H1 (cell line): ENCODE measurements at regions of chr2 and their contacts with region 1.

Region 1: DNA sequence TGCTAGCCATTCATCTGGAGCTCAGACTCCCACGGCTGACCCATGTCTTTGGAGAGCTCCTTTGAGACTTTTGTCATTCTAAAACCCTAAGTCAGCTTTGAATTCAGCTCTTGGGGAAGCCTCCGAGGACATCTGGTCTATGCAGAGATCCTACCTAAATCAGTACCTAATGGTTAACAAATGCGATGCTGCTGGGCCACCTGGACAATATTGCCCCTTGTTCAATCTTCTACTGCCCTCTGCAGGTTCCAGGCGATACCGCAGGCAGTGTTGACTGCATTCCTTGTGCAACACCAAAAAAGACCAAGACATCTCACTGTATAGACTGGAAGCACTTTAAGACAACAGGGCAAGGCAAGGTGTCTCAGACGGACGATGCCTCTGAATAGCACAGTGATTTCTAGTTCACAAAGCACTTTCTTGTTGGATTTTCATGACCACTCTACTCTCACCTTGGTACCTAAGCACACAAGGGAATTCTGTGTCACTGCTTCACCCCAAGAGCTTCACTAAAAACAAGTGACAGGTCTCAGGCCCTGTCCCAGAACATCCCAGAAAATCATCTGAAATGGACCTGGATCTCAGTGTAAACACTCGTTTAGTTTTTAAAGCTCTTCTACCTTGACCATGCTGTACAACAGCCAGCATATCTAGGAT is 80.9 kb downstream of the XDH start:
- DNase-seq: peak; percentile 71 to 92
- H3K4me3 ChIP-seq: no peak overlapping the region
- H3K27ac ChIP-seq: no peak overlapping the region
- H3K4me1 ChIP-seq: peaks cover 0 to 6% (median 0%) of the 10 kb centered on the region in 4 experiments; a peak in 2 of 7 replicates
- H3K27me3 ChIP-seq: no peaks in the 10 kb centered on the region; a peak in 1 of 7 replicates
- CTCF ChIP-seq: peak; percentile 85 to 98 (median 95)
- EP300 ChIP-seq: no peak
- POLR2A ChIP-seq: no peak
- RAD21 ChIP-seq: peak; percentile 98 to 99

Region 2: DNA sequence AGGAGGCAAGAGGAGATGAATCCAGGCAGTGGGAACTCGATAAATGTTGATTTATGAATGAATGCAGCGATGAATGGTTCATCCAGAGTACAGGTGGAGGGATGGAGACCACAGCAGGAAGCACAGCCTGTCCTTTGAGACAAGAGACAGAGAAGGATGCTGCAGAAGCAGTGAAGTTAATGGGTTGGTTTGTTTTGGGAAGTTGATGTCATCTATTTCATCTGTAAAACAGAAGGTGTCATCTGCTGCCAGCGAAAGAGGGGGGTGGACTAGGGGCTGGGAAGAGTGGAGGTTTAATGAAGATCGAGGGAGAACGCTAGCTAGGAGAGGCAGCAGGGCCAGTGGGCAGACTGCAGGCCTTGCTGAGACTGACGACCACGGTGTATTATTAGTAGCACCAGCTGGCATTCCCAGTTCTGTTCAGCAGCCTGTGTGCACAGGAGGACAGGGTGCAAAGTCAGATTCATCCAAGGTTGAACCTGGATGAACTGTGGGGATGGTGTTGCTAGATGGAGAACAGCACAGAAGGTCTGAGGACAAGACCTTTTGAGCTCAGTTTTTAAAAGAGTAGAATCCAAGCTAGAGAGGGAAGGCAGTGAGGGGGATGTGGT is 406.1 kb before region 1 on chr2:
- CTCF ChIA-PET with region 1: no interaction called
- POLR2A ChIA-PET with region 1: no interaction called
- DNase-seq: no peak
- H3K4me3 ChIP-seq: no peak overlapping the region
- H3K27ac ChIP-seq: no peak overlapping the region
- H3K4me1 ChIP-seq: no peaks in the 10 kb centered on the region; a peak in 1 of 7 replicates
- H3K27me3 ChIP-seq: no peaks in the 10 kb centered on the region
- CTCF ChIP-seq: no peak
- EP300 ChIP-seq: no peak
- POLR2A ChIP-seq: no peak
- RAD21 ChIP-seq: no peak

Region 3: GRCh38 chr2:31129375-31130171 is 204.1 kb before region 1 on chr2:
- CTCF ChIA-PET with region 1: interaction called, 13 read pairs
- POLR2A ChIA-PET with region 1: no interaction called
- DNase-seq: no peak
- H3K4me3 ChIP-seq: no peak overlapping the region
- H3K27ac ChIP-seq: no peak overlapping the region
- H3K4me1 ChIP-seq: peaks cover 2 to 25% (median 9%) of the 10 kb centered on the region in 4 experiments; a peak in 5 of 7 replicates
- H3K27me3 ChIP-seq: no peaks in the 10 kb centered on the region
- CTCF ChIP-seq: no peak
- EP300 ChIP-seq: no peak
- POLR2A ChIP-seq: no peak
- RAD21 ChIP-seq: no peak

Region 4: DNA sequence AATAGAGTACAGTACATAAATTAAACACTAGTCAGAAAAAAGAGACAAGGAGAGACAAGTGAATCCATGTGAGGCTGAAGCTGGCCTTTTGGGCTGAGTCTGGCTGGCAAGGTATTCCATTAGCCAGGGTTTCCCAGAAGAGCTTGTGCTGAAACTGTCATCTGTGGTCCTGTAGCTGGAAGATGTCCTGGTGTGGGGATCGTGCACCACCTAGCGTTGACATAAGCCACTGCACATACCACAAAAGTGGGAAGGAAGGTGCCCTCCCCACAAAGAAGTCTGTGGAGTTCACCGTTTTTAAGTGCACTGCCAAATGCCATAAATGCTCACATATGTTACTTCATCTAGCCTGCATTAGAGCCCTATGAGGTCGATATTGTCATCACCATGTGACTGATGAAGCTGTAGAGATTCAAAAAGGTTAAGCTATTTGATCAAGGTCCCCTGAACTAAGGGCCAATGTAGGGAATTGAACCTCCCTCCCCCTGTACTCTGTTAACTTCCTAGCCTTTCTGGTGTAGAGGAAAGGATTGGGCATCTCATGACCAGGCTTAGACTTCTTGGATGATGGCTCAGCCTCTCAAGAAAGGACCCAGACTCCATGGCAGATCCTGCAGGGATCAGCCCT is 163.5 kb before region 1 on chr2:
- CTCF ChIA-PET with region 1: interaction called, 54 read pairs
- POLR2A ChIA-PET with region 1: no interaction called
- DNase-seq: peak; percentile 23 to 72
- H3K4me3 ChIP-seq: no peak overlapping the region
- H3K27ac ChIP-seq: no peak overlapping the region
- H3K4me1 ChIP-seq: no peaks in the 10 kb centered on the region
- H3K27me3 ChIP-seq: no peaks in the 10 kb centered on the region
- CTCF ChIP-seq: peak; percentile 86 to 96 (median 96)
- EP300 ChIP-seq: no peak
- POLR2A ChIP-seq: no peak
- RAD21 ChIP-seq: peak; percentile 97 to 98

Region 5: DNA sequence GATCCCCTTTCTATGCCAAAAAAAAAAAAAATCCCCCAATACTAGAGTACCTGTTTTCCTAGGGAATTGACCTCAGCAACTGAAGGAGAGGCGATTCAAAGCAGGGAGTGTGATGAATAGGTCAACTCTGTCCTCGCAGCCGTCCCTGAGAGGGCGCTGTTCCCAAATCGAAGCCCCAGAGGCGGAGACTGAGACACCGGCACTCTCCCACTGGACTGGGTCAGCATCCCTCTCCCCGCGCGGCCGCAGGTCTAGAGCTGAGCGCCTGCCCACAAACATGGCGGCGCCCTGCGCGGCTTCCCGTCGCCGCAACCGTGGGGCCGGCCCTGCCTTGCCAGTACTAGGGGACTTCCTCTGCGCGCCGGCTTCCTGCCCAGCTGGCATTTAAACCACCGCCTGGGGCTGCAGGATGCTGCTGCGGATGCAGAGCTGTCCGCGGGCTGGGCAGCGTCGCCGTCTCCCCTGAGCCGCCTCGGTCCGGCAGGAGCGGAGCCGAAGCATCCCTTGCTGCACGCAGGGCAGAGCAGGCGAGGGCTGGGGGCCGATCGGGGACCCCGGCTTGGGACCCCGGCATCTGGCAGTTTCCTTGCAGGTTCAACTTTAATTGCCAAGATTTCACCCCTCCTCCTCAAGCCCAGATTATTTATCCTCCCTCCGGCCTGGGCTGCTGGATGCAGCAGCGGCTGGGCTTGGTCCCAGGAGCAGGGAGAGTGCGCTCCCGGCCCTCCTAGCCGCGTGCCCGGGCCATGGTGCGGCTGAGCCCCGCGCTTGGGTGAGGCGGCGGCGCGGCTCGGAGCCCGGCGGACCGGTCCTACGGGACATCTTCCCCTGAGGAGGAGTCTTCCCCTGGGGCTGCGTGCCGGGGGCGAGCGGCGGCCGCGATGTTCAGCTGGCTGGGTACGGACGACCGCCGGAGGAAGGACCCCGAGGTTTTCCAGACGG is 99.6 kb before region 1 on chr2 and contains the start of gene EHD3:
- CTCF ChIA-PET with region 1: interaction called, 30 read pairs
- POLR2A ChIA-PET with region 1: no interaction called
- DNase-seq: peak; percentile 94 to 95
- H3K4me3 ChIP-seq: peak within 1 kb of the TSS; percentile 54 to 84 (median 70)
- H3K27ac ChIP-seq: no peak within 1 kb of the TSS
- H3K4me1 ChIP-seq: peaks cover 4 to 6% (median 4%) of the 10 kb centered on the region in 4 experiments; a peak in 5 of 7 replicates
- H3K27me3 ChIP-seq: peaks cover 0 to 8% (median 5%) of the 10 kb centered on the region in 4 experiments; a peak in 4 of 7 replicates
- CTCF ChIP-seq: peak; percentile 69 to 91 (median 84)
- EP300 ChIP-seq: no peak
- POLR2A ChIP-seq: peak in 1 of 2 experiments; percentile 91; a peak in 2 of 3 replicates
- RAD21 ChIP-seq: peak; percentile 57 to 63
- total RNA-seq, gene EHD3: 12.0 TPM in 2 replicates

Region 6: DNA sequence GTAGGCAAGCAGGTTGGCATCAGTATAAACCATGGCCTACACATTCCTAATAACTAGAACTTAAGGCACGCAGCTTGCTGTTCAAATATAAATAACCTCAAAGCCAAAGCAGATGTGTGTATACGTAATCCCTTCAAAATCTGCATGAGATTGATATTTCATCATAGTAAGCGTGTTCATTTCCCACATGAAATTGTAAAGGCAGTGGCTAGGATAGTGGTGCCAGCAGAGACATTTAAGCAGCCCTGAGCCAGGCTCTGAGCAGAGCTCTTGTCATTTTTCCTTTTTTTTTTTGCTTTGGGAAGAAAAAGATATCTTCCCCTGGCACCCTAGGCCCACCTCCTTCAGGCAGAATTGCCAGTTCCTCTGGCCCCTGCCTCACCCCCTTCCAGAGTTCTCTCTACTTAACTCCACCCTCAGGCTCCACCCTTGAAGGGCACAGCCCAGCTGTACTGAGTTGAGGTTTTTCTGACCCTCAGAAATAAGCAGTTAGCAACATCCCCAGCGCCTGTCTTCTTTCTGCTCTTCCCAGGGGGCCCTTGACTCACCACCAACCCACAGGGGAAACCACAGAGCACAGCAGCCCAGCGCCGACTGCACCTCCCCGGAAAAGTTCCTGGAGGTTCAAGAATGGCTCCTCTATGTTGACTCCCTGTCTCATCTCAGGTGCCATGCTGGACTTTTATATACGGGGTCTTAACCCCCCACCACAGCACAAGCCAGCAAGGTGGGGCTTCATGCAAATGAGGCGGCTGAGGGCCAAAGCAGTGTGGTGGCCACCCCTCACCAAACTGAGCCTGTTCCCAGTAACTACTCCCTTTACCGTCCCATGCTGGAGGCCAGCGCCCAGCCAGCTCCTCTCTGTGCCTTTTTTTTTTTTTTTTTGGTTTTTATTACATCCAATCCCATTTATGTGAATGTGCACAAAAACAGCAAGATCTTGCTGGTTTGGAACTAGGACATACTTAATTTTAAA is 15.0 kb before region 1 on chr2:
- CTCF ChIA-PET with region 1: interaction called, 64 read pairs
- POLR2A ChIA-PET with region 1: no interaction called
- DNase-seq: no peak
- H3K4me3 ChIP-seq: no peak overlapping the region
- H3K27ac ChIP-seq: no peak overlapping the region
- H3K4me1 ChIP-seq: peaks cover 0 to 5% (median under 1%) of the 10 kb centered on the region in 4 experiments; a peak in 2 of 7 replicates
- H3K27me3 ChIP-seq: no peaks in the 10 kb centered on the region
- CTCF ChIP-seq: no peak
- EP300 ChIP-seq: no peak
- POLR2A ChIP-seq: no peak
- RAD21 ChIP-seq: no peak

Region 7: GRCh38 chr2:31386648-31387047 is 53.0 kb after region 1 on chr2:
- CTCF ChIA-PET with region 1: interaction called, 10 read pairs
- POLR2A ChIA-PET with region 1: no interaction called
- DNase-seq: peak in 1 of 2 experiments; percentile 61
- H3K4me3 ChIP-seq: no peak overlapping the region
- H3K27ac ChIP-seq: no peak overlapping the region
- H3K4me1 ChIP-seq: peaks cover 0 to 12% (median 8%) of the 10 kb centered on the region in 4 experiments; a peak in 6 of 7 replicates
- H3K27me3 ChIP-seq: no peaks in the 10 kb centered on the region
- CTCF ChIP-seq: peak; percentile 27 to 36 (median 33); a peak in 3 of 4 replicates
- EP300 ChIP-seq: no peak
- POLR2A ChIP-seq: no peak
- RAD21 ChIP-seq: peak; percentile 29 to 43; a peak in 3 of 4 replicates

Region 8: DNA sequence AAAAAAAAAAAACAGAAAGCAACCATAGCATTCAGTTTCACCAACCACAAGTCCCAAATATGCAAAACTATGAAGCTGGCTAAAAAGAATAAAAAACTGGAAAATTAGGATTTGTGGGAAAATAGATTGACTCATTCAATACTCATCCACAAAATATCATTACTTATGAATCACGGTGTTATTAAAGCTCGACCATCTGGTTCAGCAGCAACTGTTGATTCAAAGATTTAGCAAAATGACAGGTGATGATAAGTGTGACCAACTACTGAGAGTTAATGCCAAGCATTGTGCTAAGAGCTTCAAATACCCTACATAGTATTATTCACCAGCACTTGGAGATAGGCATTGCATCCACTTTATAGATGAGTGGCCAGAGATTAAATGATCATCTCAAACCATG is 107.1 kb after region 1 on chr2:
- CTCF ChIA-PET with region 1: no interaction called
- POLR2A ChIA-PET with region 1: no interaction called
- DNase-seq: no peak
- H3K4me3 ChIP-seq: no peak overlapping the region
- H3K27ac ChIP-seq: no peak overlapping the region
- H3K4me1 ChIP-seq: no peaks in the 10 kb centered on the region
- H3K27me3 ChIP-seq: no peaks in the 10 kb centered on the region
- CTCF ChIP-seq: no peak
- EP300 ChIP-seq: no peak
- POLR2A ChIP-seq: no peak
- RAD21 ChIP-seq: no peak

Region 9: GRCh38 chr2:31504311-31504710 is 170.7 kb after region 1 on chr2:
- CTCF ChIA-PET with region 1: no interaction called
- POLR2A ChIA-PET with region 1: no interaction called
- DNase-seq: no peak
- H3K4me3 ChIP-seq: no peak overlapping the region
- H3K27ac ChIP-seq: no peak overlapping the region
- H3K4me1 ChIP-seq: no peaks in the 10 kb centered on the region
- H3K27me3 ChIP-seq: no peaks in the 10 kb centered on the region
- CTCF ChIP-seq: no peak
- EP300 ChIP-seq: no peak
- POLR2A ChIP-seq: no peak
- RAD21 ChIP-seq: no peak